Activated T-helper 1 cell treated with anti-CD3 and anti-CD28 coated beads, Interleukin-12 subunit alpha, Interleukin-12 subunit beta, Interleukin-2, Interleukin-4 antibody, amounts not matched to agents 30 ng/mL and 10 ng/mL and 1 ng/mL, durations not matched to agents 14 hours and 24 hours and 36 hours (primary cell): ENCODE measurements at regions of chr10 and their contacts with region 1.

Region 1: GRCh38 chr10:98425511-98426352 is 10.8 kb upstream of the PYROXD2 start:
- DNase-seq: peak; percentile 11
- H3K4me3 Mint-ChIP-seq: no peak overlapping the region
- H3K27ac Mint-ChIP-seq: no peak overlapping the region
- H3K4me1 Mint-ChIP-seq: no peaks in the 10 kb centered on the region
- H3K27me3 Mint-ChIP-seq: no peaks in the 10 kb centered on the region

Region 2: DNA sequence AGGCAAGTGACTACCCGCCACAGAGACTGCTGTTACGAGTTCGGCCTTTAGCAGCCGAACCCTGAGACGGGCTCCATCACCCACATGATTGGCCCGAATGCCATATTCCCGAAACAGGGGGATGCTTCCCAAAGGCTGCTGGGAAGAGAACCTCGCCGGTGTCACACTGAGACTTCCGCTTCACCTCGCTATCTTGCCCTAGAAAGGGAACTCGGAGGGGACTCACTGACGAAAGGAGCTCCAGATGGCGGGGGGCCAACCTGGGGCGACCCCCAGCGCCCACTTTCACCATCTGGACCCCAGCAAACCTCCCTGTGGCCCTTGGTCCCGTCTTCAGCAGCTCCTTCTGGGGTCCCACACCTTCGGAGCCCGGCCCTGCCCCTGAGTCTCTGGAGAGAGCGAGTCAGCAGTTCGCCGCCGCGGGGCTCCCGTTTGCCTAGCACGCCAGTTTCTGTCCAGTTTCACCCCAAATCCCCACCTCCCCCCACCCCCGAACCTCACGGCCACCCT is 20.5 kb after region 1 on chr10:
- intact Hi-C with region 1: no loop called
- DNase-seq: peak; percentile 23
- H3K4me3 Mint-ChIP-seq: peak overlapping the region; percentile 92
- H3K27ac Mint-ChIP-seq: peak overlapping the region; percentile 80
- H3K4me1 Mint-ChIP-seq: peaks cover 35% of the 10 kb centered on the region
- H3K27me3 Mint-ChIP-seq: peaks cover 17% of the 10 kb centered on the region

Region 3: DNA sequence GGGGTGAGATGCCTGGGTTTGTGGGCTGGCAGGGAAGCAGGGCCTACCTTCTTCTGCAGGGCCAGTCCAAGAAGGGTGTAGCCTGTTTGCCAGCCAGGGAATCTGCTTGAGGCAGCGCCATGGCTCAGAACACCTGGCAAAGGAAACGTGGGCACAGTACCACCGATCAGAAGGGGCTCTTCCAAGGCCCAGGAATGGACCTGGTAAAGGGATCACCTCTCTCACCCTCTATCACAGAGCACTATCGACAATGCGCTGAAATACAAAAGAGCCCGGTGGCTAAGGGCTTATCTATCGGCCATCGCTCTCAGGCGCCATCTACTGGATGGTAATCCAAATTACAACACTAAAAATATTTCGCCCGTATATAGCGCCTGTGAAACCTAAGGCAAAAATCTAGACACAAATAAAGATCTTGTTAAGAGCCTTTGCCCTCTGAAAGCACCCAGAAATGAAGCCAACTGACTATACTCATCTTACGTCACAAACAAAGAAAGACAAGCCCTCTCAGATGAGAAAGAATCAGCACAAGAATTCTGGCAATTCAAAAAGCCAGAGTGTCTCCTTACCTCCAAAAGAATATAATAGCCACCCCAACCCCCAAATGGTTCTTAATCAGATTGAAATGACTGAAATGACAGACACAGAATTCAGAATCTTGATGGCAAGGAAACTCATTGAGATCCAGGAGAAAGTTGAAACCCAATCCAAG is 238.8 kb after region 1 on chr10:
- intact Hi-C with region 1: loop called (anchors 1 kb)
- DNase-seq: peak; percentile 4
- H3K4me3 Mint-ChIP-seq: no peak overlapping the region
- H3K27ac Mint-ChIP-seq: no peak overlapping the region
- H3K4me1 Mint-ChIP-seq: no peaks in the 10 kb centered on the region
- H3K27me3 Mint-ChIP-seq: peaks cover 27% of the 10 kb centered on the region

Region 4: GRCh38 chr10:99958302-99958701 is 1532.6 kb after region 1 on chr10:
- intact Hi-C with region 1: no loop called
- DNase-seq: no peak
- H3K4me3 Mint-ChIP-seq: no peak overlapping the region
- H3K27ac Mint-ChIP-seq: no peak overlapping the region
- H3K4me1 Mint-ChIP-seq: no peaks in the 10 kb centered on the region
- H3K27me3 Mint-ChIP-seq: no peaks in the 10 kb centered on the region